Activated CD8-positive, alpha-beta T cell treated with anti-CD3 and anti-CD28 coated beads, Interleukin-2, amount 10 ng/mL, durations not matched to agents 7 days and 5 days (primary cell): ENCODE measurements at regions of chr2 and their contacts with region 1.

Region 1: GRCh38 chr2:100262555-100263320 is 59.6 kb downstream of the LONRF2 start:
- DNase-seq: peak; percentile 72
- ATAC-seq: peak; percentile 75
- H3K4me3 Mint-ChIP-seq: no peak overlapping the region
- H3K27ac Mint-ChIP-seq: no peak overlapping the region
- H3K4me1 Mint-ChIP-seq: peaks cover 2% of the 10 kb centered on the region
- H3K27me3 Mint-ChIP-seq: no peaks in the 10 kb centered on the region

Region 2: DNA sequence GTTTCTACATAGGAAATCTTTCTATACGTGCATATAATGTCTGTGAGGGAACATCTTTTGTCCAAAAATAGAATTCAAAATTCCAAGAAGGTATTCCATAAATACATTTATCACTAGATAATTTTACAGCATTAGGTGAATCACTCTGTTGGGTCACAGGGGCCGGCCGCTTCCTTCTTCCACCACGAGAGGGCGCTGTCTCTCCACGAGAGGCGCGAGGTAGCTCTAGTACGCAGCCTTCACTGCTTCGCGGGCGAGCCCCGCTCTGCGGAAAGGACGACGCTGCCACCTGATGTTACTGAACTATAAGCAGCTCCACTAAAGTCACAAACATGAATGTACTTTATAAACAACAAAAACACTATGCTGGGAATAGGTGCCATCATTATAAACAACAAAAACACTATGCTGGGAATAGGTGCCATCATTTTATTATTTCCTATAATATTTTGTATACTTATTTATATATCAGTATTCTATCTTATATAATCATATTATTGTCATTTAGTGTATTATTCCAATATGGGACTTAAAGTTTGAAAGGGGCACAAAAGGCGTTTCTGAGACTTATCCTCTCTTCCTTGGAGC is 703.6 kb before region 1 on chr2:
- CTCF ChIA-PET with region 1: interaction called, 39 read pairs
- POLR2A ChIA-PET with region 1: no interaction called
- DNase-seq: peak; percentile 88
- ATAC-seq: peak; percentile 98
- H3K4me3 Mint-ChIP-seq: no peak overlapping the region
- H3K27ac Mint-ChIP-seq: no peak overlapping the region
- H3K4me1 Mint-ChIP-seq: peaks cover 2% of the 10 kb centered on the region
- H3K27me3 Mint-ChIP-seq: peaks cover 11% of the 10 kb centered on the region

Region 3: DNA sequence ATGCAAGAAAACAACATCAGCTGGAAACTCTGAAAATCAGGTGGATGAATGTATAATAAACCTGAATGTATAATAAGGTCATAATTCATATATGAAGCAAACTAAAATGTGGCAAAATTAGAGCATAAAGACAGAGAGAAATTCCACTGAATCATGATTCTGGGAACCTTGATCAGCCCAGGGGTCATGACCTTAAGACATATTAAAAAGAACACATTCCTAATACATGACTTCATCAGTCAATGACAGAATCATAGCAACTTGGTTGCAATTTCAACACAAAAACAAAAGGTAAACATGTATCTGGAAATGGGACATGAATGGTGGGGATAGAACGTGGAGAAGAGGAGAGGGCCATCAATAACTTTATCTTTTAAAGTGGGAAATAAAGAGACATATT is 138.0 kb before region 1 on chr2:
- CTCF ChIA-PET with region 1: no interaction called
- POLR2A ChIA-PET with region 1: no interaction called
- DNase-seq: no peak
- ATAC-seq: no peak
- H3K4me3 Mint-ChIP-seq: no peak overlapping the region
- H3K27ac Mint-ChIP-seq: no peak overlapping the region
- H3K4me1 Mint-ChIP-seq: no peaks in the 10 kb centered on the region
- H3K27me3 Mint-ChIP-seq: no peaks in the 10 kb centered on the region

Region 4: GRCh38 chr2:100161945-100162620 is 100.7 kb before region 1 on chr2:
- CTCF ChIA-PET with region 1: no interaction called
- POLR2A ChIA-PET with region 1: no interaction called
- DNase-seq: no peak
- ATAC-seq: no peak
- H3K4me3 Mint-ChIP-seq: no peak overlapping the region
- H3K27ac Mint-ChIP-seq: no peak overlapping the region
- H3K4me1 Mint-ChIP-seq: no peaks in the 10 kb centered on the region
- H3K27me3 Mint-ChIP-seq: peaks cover 2% of the 10 kb centered on the region

Region 5: GRCh38 chr2:100272841-100273329 is 10.1 kb after region 1 on chr2:
- CTCF ChIA-PET with region 1: interaction called, 30 read pairs
- POLR2A ChIA-PET with region 1: no interaction called
- DNase-seq: no peak
- ATAC-seq: no peak
- H3K4me3 Mint-ChIP-seq: no peak overlapping the region
- H3K27ac Mint-ChIP-seq: no peak overlapping the region
- H3K4me1 Mint-ChIP-seq: peaks cover 11% of the 10 kb centered on the region
- H3K27me3 Mint-ChIP-seq: peaks cover 2% of the 10 kb centered on the region

Region 6: DNA sequence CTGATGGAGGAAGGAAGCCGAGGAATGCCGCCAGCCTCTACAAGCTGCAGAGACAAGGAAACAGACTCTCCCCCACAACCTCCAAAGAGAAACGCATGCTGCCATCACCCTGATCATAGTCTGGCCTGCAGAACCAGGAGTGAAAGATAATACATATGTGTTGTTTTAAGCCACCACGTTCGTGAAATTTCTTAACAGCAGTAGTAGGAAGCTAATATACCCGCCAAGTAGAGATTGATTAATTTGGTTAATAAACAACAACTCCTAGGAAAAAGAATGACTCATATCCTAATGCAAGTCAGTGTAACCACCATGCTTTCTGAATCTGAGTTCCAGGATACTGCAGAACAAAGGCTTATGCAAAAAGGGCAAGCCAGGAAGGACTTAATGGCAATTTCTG is 23.0 kb after region 1 on chr2:
- CTCF ChIA-PET with region 1: interaction called, 28 read pairs
- POLR2A ChIA-PET with region 1: no interaction called
- DNase-seq: no peak
- ATAC-seq: no peak
- H3K4me3 Mint-ChIP-seq: no peak overlapping the region
- H3K27ac Mint-ChIP-seq: no peak overlapping the region
- H3K4me1 Mint-ChIP-seq: peaks cover 58% of the 10 kb centered on the region
- H3K27me3 Mint-ChIP-seq: peaks cover 4% of the 10 kb centered on the region

Region 7: GRCh38 chr2:100291120-100291970 is 28.6 kb after region 1 on chr2:
- CTCF ChIA-PET with region 1: interaction called, 28 read pairs
- POLR2A ChIA-PET with region 1: no interaction called
- DNase-seq: peak; percentile 84
- ATAC-seq: peak; percentile 96
- H3K4me3 Mint-ChIP-seq: no peak overlapping the region
- H3K27ac Mint-ChIP-seq: no peak overlapping the region
- H3K4me1 Mint-ChIP-seq: peaks cover 11% of the 10 kb centered on the region
- H3K27me3 Mint-ChIP-seq: peaks cover 20% of the 10 kb centered on the region